HEK293 (cell line): ENCODE measurements at regions of chr7 and their contacts with region 1.

Region 1: DNA sequence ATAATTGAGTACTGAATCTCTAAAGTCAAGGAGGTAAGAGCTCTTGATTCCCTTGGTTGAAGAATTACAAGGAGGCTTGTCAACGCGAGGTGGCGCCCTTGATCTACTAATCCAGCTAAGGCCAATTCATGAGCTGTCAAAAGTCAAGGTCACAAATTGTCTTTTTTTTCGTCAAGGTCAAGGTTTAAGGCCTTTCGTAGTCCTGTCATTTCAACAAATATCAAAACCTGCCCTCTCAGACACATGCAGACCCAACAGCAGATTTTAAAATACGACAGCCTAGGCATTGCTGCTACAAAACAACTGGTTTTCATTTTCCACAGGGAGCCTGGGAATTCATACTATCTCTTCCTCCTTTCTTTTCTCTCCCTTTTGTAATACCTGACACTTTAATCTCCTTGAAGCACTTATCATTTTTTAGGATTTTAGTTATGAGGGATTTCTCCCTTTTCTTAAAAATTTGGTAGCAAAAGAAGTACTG is 3.6 kb downstream of the HOXA13 start:
- H3K4me3 ChIP-seq: peak overlapping the region; percentile 89
- H3K27ac ChIP-seq: no peak overlapping the region
- H3K4me1 ChIP-seq: peaks cover 17% of the 10 kb centered on the region
- CTCF ChIP-seq: peak; percentile 71

Region 2: GRCh38 chr7:27185013-27185855 is 11.1 kb before region 1 on chr7 and contains the start of gene HOXA11:
- CTCF ChIA-PET with region 1: interaction called, 26 read pairs
- POLR2A ChIA-PET with region 1: interaction called, 36 read pairs
- H3K4me3 ChIP-seq: peak within 1 kb of the TSS; percentile 64
- H3K27ac ChIP-seq: peak within 1 kb of the TSS; percentile 99
- H3K4me1 ChIP-seq: peaks cover 47% of the 10 kb centered on the region
- CTCF ChIP-seq: peak; percentile 26; the same call in 1 of the 2 replicates

Region 3: GRCh38 chr7:27605689-27606269 is 409.5 kb after region 1 on chr7:
- CTCF ChIA-PET with region 1: interaction called, 18 read pairs
- POLR2A ChIA-PET with region 1: interaction called, 3 read pairs
- H3K4me3 ChIP-seq: no peak overlapping the region
- H3K27ac ChIP-seq: peak overlapping the region; percentile 85
- H3K4me1 ChIP-seq: peaks cover 48% of the 10 kb centered on the region
- CTCF ChIP-seq: no peak

Region 4: DNA sequence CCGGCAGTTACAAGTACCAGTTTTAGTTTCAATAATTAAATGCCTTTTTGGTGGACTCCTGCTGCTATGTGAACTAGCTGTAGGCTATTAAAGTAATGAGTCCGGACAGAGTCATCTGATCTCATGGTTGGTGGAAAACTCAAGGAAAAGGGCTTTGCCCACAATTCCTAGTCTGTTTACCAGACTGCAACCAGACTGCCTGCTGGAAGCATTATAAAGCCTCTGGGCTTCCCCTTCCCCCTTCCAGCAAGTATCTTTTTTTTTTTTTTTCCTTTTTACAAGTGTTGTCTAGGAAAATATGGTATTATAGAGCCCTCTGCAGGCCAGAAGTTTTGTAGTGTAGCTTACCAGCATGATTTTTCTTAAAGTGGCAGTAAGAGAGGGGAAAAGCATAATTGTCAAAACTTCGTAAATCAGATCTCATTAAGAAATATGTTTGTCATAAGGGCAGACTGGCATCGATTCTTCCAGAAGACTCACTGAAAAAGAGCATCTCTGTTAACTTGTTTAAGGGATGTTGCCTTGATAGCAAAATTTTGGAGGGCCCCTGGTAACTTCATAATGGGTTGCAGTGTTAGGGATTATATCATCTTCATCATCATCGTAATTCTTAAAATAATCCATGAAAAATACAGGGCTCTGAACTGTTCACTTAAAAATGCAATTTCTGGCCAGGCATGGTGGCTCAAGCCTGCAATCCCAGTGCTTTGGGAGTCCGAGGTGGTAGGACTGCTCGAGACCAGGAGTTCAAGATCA is 724.9 kb after region 1 on chr7:
- CTCF ChIA-PET with region 1: interaction called, 26 read pairs
- POLR2A ChIA-PET with region 1: no interaction called
- H3K4me3 ChIP-seq: no peak overlapping the region
- H3K27ac ChIP-seq: no peak overlapping the region
- H3K4me1 ChIP-seq: peaks cover 9% of the 10 kb centered on the region; the same call in 1 of the 2 replicates
- CTCF ChIP-seq: peak; percentile 64; the same call in 1 of the 2 replicates

Region 5: GRCh38 chr7:28096713-28097112 is 900.4 kb after region 1 on chr7:
- CTCF ChIA-PET with region 1: interaction called, 17 read pairs
- POLR2A ChIA-PET with region 1: no interaction called
- H3K4me3 ChIP-seq: no peak overlapping the region
- H3K27ac ChIP-seq: no peak overlapping the region
- H3K4me1 ChIP-seq: no peaks in the 10 kb centered on the region
- CTCF ChIP-seq: no peak